OCI-LY7 (cell line): ENCODE measurements at regions of chr3 and their contacts with region 1.

Region 1: GRCh38 chr3:148366743-148367410 is 330.8 kb upstream of the AGTR1 start:
- DNase-seq: no peak
- H3K4me3 ChIP-seq: no peak overlapping the region
- H3K27ac ChIP-seq: no peak overlapping the region
- H3K4me1 ChIP-seq: no peaks in the 10 kb centered on the region
- CTCF ChIP-seq: peak; percentile 45; the same call in 1 of the 2 replicates

Region 2: DNA sequence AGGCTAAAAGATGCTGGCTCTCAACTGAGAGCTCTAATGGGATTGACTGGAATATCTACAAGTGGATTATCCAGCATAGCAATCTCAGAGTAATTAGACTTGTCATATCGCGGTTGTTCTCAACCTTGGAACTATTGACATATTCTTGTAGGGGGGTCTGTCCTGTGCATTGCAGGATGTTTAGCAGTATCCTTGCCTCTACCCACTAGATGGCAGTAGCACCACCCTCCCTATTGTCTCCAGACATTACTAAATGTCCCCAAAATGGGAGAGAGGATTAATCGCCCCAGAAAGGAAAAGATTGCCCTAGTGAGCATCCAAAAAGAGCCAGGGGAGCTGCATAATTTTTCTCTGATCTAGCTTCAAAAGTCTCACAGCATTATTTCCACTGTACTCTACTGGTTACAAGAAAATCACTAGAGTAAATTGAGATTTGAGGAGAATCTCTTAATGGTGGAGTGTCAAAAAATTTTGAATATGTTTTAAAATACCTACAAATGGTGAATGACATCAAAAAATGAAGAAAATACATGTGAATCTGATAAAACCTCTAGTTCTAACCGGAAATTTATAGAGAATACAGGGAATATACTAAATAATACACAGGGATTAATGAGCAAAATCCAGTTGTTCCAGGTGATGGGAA is 57.4 kb before region 1 on chr3:
- CTCF ChIA-PET with region 1: no interaction called
- POLR2A ChIA-PET with region 1: no interaction called
- intact Hi-C with region 1: loop called (anchors 2 kb)
- DNase-seq: peak; percentile 52
- H3K4me3 ChIP-seq: no peak overlapping the region
- H3K27ac ChIP-seq: no peak overlapping the region
- H3K4me1 ChIP-seq: no peaks in the 10 kb centered on the region
- CTCF ChIP-seq: peak; percentile 87